ENCODE measurements at regions of chr12 and their contacts with region 1.

Region 1: DNA sequence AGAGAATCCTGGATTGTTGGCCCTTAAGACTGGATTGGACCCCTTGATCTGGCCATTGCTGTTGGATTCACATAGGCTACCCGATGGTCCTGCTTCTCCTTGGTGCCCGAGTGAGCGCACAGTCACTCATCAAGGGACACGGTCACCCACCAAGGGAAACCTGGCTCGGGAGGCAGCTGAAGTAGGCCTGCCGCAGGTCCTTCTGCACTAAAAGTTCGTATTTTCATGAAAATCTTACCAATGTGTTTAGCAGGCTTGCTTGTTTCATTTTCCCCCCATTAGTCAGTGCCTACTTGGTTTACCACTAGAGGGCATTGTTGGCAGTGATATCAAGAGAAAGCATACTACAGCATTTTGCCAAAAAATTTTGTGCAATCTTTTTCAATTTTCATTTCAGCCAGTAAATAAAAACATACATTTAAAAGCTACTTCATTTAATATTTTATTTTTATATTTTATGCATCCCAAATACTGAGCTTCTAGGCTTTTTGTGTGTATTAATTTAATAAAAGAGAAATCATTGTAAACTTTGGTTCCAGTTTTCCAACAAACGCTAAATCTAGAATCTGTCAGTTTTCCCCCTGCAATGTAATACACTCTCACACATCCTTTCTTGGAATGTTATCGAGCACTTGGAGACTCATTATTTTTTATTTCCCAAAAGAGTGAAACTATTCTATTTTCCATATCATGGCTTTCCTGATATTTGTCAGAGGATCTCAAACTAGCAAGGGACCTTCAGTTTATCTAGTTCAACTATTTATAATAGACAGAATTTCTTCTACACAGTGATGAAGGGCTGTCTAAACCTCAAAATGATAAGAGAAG is 116.7 kb downstream of the LMNTD1 start:
- DNase-seq: no peak
- H3K4me3 Mint-ChIP-seq: no peak overlapping the region
- H3K27ac Mint-ChIP-seq: no peak overlapping the region
- H3K4me1 Mint-ChIP-seq: peaks cover 4% of the 10 kb centered on the region
- H3K27me3 Mint-ChIP-seq: peaks cover 1% of the 10 kb centered on the region

Region 2: DNA sequence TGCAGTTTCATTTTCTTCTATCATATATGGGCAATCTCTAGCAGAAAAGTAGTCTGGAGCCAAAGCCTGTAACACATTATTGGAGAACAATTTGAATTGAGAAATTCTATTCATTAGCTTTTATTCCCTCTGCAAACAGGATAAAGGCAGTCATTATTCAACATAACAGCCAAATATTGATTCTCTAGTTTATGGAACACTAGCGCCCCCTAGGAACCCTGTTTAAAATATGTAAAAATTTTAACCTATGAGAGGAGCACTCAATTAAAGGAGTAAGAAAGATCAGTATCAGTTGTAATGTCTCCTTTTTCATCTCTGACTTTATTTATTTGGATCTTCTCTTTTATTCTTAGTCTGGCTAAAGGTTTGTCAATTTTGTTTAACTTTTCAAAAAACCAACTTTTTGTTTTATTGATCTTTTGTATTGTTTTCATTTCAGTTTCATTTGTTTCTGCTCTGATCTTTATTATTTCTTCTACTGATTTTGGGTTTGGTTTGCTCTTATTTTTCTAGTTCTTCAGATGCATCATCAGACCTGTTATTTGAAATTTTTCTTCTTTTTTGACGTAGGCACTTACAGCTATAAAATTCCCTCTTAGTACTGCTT is 121.5 kb after region 1 on chr12:
- CTCF ChIA-PET with region 1: interaction called, 4 read pairs
- POLR2A ChIA-PET with region 1: no interaction called
- intact Hi-C with region 1: loop called (anchors 10 kb)
- DNase-seq: no peak
- H3K4me3 Mint-ChIP-seq: no peak overlapping the region
- H3K27ac Mint-ChIP-seq: no peak overlapping the region
- H3K4me1 Mint-ChIP-seq: no peaks in the 10 kb centered on the region
- H3K27me3 Mint-ChIP-seq: no peaks in the 10 kb centered on the region

Region 3: DNA sequence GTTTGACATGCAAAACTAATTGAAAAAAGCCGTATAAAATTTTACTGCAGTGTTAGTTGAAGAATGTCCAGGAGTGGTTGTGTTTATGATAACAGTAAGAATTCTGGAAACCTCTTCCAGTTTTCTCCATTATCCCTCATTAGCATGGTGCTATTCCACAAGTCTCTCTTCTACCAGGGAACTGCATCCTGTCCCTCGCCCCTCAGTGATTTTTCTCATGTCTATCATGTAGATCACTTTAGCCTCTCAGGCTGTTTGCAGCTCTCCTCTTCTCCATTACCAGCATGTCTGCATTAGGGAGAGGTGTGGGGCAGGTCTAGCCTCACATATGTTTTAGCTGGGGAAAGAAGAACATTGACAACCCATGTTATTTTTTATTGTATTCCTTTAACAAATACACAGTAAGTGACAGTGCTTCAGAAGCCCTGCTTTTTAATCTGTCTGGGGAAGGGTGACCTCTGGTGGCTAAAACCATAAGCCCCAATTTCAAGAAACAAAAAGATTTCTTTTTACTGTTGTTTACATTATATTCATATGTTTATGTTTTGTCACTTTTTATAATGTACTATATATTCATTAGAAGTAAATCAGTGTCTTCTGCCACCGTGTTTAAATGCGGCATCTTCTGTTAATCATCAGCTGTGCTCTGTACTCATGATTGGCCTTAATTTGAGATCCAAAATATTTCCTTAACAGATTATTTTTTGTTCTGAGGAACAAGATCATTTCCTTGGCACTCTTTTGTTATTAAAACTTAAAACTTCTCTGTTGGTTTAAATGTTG is 592.7 kb after region 1 on chr12:
- CTCF ChIA-PET with region 1: interaction called, 8 read pairs
- POLR2A ChIA-PET with region 1: no interaction called
- intact Hi-C with region 1: loop called (anchors 1 kb)
- DNase-seq: no peak
- H3K4me3 Mint-ChIP-seq: no peak overlapping the region
- H3K27ac Mint-ChIP-seq: no peak overlapping the region
- H3K4me1 Mint-ChIP-seq: no peaks in the 10 kb centered on the region
- H3K27me3 Mint-ChIP-seq: peaks cover 3% of the 10 kb centered on the region